PC-9 (cell line): ENCODE measurements at regions of chr6 and their contacts with region 1.

Region 1: GRCh38 chr6:26025894-26026832 is 61.1 kb upstream of the HFE start:
- DNase-seq: peak; percentile 92 to 93
- H3K4me3 ChIP-seq: peak overlapping the region; percentile 75
- H3K27ac ChIP-seq: peak overlapping the region; percentile 98
- H3K4me1 ChIP-seq: peaks cover 57% of the 10 kb centered on the region
- H3K27me3 ChIP-seq: no peaks in the 10 kb centered on the region
- CTCF ChIP-seq: peak; percentile 89

Region 2: DNA sequence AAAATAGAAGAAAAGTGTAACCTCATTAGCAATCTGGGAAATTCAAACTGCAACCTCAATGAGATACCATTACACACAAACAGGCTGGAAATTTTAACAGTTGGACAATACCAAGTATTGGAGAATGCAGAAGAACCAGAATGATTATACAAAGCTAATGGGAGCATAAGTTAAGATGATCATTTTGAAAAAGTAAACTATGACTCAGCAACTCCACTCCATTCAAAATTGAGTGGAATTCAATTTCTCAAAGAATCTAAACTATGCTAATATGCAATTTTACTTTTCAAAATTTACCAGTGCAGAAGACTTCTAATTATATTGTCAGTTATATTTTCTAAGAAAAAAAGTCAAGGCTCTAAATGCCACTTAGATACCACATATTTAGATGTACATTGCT is 1554.0 kb before region 1 on chr6:
- CTCF ChIA-PET with region 1: no interaction called
- POLR2A ChIA-PET with region 1: no interaction called
- intact Hi-C with region 1: no loop called
- DNase-seq: peak in 1 of 2 experiments; percentile 88
- H3K4me3 ChIP-seq: peak overlapping the region; percentile 10; the same call in 1 of the 2 replicates
- H3K27ac ChIP-seq: peak overlapping the region; percentile 93
- H3K4me1 ChIP-seq: peaks cover 25% of the 10 kb centered on the region
- H3K27me3 ChIP-seq: no peaks in the 10 kb centered on the region
- CTCF ChIP-seq: no peak

Region 3: GRCh38 chr6:25202505-25202904 is 823.7 kb before region 1 on chr6:
- CTCF ChIA-PET with region 1: no interaction called
- POLR2A ChIA-PET with region 1: interaction called, 23 read pairs
- intact Hi-C with region 1: no loop called
- DNase-seq: no peak
- H3K4me3 ChIP-seq: no peak overlapping the region
- H3K27ac ChIP-seq: no peak overlapping the region
- H3K4me1 ChIP-seq: no peaks in the 10 kb centered on the region
- H3K27me3 ChIP-seq: no peaks in the 10 kb centered on the region
- CTCF ChIP-seq: no peak

Region 4: DNA sequence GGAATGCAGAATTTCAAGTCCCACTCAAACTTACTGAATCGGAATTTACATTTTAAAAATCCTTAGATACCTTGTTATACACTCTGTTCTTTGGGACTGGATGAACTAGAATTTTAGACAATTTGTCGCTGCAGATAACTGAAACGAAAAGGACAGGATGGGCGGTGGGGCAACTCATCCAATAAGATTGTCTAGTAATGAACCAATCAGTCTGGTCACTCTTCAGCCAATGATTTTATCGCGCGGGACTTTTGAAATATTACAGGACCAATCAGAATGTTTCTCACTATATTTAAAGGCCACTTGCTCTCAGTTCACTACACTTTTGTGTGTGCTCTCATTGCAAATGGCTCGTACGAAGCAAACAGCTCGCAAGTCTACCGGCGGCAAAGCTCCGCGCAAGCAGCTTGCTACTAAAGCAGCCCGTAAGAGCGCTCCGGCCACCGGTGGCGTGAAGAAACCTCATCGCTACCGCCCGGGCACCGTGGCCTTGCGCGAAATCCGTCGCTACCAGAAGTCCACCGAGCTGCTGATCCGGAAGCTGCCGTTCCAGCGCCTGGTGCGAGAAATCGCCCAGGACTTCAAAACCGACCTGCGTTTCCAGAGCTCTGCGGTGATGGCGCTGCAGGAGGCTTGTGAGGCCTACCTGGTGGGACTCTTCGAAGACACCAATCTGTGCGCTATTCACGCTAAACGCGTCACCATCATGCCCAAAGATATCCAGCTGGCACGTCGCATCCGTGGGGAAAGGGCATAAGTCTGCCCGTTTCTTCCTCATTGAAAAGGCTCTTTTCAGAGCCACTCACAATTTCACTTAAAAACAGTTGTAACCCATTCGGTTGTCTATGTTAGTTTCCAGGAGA is 19.1 kb after region 1 on chr6:
- CTCF ChIA-PET with region 1: interaction called, 10 read pairs
- POLR2A ChIA-PET with region 1: interaction called, 35 read pairs
- intact Hi-C with region 1: no loop called
- DNase-seq: peak; percentile 74 to 88
- H3K4me3 ChIP-seq: peak overlapping the region; percentile 59
- H3K27ac ChIP-seq: peak overlapping the region; percentile 77
- H3K4me1 ChIP-seq: peaks cover 21% of the 10 kb centered on the region; the same call in 1 of the 2 replicates
- H3K27me3 ChIP-seq: no peaks in the 10 kb centered on the region
- CTCF ChIP-seq: no peak; the same call in 1 of the 2 replicates

Region 5: DNA sequence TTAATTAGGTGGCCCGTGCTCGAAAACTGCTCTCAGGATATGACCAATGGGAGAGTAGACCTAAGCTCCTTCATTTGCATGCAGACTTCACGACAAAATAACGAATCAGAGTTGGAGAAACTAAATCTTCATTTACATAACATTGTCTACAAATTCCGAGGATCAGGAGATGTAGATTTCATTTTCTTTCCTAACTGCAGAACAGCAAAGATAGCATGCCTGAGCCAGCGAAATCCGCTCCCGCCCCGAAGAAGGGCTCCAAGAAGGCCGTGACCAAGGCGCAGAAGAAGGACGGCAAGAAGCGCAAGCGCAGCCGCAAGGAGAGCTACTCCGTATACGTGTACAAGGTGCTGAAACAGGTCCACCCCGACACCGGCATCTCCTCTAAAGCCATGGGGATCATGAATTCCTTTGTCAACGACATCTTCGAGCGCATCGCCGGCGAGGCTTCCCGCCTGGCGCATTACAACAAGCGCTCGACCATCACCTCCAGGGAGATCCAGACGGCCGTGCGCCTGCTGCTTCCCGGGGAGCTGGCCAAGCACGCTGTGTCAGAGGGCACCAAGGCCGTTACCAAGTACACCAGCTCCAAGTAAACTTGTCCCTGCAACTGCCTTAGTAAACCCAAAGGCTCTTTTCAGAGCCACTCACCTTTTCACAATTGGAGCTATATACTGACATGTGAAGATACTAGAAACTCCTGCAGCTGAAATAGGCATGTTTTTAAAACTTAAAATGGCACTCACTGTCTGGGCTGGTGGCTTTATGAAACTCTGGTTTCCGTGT is 157.6 kb after region 1 on chr6:
- CTCF ChIA-PET with region 1: no interaction called
- POLR2A ChIA-PET with region 1: interaction called, 10 read pairs
- intact Hi-C with region 1: no loop called
- DNase-seq: peak; percentile 72 to 87
- H3K4me3 ChIP-seq: peak overlapping the region; percentile 54
- H3K27ac ChIP-seq: peak overlapping the region; percentile 65
- H3K4me1 ChIP-seq: peaks cover 12% of the 10 kb centered on the region; the same call in 1 of the 2 replicates
- H3K27me3 ChIP-seq: no peaks in the 10 kb centered on the region
- CTCF ChIP-seq: no peak

Region 6: GRCh38 chr6:26285143-26286134 is 259.3 kb after region 1 on chr6:
- CTCF ChIA-PET with region 1: no interaction called
- POLR2A ChIA-PET with region 1: interaction called, 5 read pairs
- intact Hi-C with region 1: loop called (anchors 10 kb)
- DNase-seq: peak; percentile 96 to 99
- H3K4me3 ChIP-seq: peak overlapping the region; percentile 84
- H3K27ac ChIP-seq: peak overlapping the region; percentile 93
- H3K4me1 ChIP-seq: peaks cover 11% of the 10 kb centered on the region
- H3K27me3 ChIP-seq: no peaks in the 10 kb centered on the region
- CTCF ChIP-seq: no peak

Region 7: DNA sequence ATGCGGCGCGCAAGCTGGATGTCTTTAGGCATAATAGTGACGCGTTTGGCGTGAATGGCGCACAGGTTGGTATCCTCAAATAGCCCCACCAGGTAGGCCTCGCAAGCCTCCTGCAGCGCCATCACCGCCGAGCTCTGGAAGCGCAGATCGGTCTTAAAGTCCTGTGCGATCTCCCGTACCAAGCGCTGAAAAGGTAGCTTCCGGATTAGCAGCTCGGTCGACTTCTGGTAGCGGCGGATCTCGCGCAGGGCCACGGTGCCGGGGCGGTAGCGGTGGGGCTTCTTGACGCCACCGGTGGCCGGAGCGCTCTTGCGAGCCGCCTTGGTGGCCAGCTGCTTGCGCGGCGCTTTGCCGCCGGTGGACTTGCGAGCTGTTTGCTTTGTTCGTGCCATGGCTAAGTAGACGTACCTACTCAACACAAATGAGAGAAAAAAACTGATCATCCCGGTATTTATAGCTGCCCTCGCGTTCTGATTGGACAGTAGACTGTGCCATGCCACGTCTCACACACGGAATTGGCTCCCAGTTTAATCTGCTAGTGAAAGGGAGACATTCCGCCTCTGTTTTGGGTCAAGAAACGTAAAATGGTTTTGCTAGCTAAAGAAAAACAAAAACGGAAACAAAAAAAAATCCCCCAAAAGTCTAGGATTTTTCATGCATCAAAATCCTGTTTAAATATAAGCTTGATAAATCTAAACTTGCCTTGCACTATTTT is 1845.9 kb after region 1 on chr6:
- CTCF ChIA-PET with region 1: no interaction called
- POLR2A ChIA-PET with region 1: interaction called, 10 read pairs
- intact Hi-C with region 1: no loop called
- DNase-seq: peak; percentile 83 to 85
- H3K4me3 ChIP-seq: peak overlapping the region; percentile 67
- H3K27ac ChIP-seq: peak overlapping the region; percentile 70
- H3K4me1 ChIP-seq: peaks cover 7% of the 10 kb centered on the region; the same call in 1 of the 2 replicates
- H3K27me3 ChIP-seq: no peaks in the 10 kb centered on the region
- CTCF ChIP-seq: peak; percentile 36; the same call in 1 of the 2 replicates